H1 (cell line): ENCODE measurements at regions of chr17 and their contacts with region 1.

Region 1: GRCh38 chr17:50783193-50783660 is 15.9 kb upstream of the ANKRD40CL start:
- DNase-seq: peak; percentile 89 to 98
- H3K4me3 ChIP-seq: no peak overlapping the region
- H3K27ac ChIP-seq: no peak overlapping the region
- H3K4me1 ChIP-seq: peaks cover 0 to 3% (median 0%) of the 10 kb centered on the region in 4 experiments; a peak in 1 of 7 replicates
- H3K27me3 ChIP-seq: no peaks in the 10 kb centered on the region
- CTCF ChIP-seq: peak; percentile 99 to 100 (median 99)
- EP300 ChIP-seq: peak in 1 of 2 experiments; percentile 40; a peak in 1 of 3 replicates
- POLR2A ChIP-seq: no peak
- RAD21 ChIP-seq: peak; percentile 99 to 100

Region 2: DNA sequence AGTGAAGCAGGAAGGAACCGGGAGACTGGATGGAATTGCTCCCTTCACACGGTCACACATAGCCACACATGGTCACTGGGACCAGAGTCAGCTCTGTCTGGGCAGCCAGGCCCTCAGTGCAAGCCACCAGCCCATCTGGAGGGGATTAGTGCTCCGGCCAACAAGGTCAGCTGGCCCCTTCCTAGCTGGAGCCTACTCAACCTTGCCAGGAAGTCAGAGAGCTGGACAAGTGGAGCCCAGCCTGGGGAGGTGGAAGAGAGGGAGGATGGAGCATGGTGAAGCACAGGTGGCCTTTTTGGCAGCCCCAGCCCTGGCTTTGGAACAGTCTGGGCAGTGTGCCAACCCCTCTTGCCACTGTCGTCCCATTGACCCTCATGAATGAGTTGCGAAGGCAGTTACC is 226.4 kb before region 1 on chr17:
- CTCF ChIA-PET with region 1: no interaction called
- POLR2A ChIA-PET with region 1: no interaction called
- DNase-seq: no peak
- H3K4me3 ChIP-seq: no peak overlapping the region
- H3K27ac ChIP-seq: no peak overlapping the region
- H3K4me1 ChIP-seq: peaks cover 0 to 9% (median 3%) of the 10 kb centered on the region in 4 experiments; a peak in 4 of 7 replicates
- H3K27me3 ChIP-seq: peaks cover 4 to 37% (median 29%) of the 10 kb centered on the region in 4 experiments
- CTCF ChIP-seq: no peak
- EP300 ChIP-seq: no peak
- POLR2A ChIP-seq: no peak
- RAD21 ChIP-seq: no peak

Region 3: GRCh38 chr17:50771991-50772785 is 11.0 kb before region 1 on chr17:
- CTCF ChIA-PET with region 1: interaction called, 15 read pairs
- POLR2A ChIA-PET with region 1: interaction called, 3 read pairs
- DNase-seq: no peak
- H3K4me3 ChIP-seq: no peak overlapping the region
- H3K27ac ChIP-seq: no peak overlapping the region
- H3K4me1 ChIP-seq: no peaks in the 10 kb centered on the region
- H3K27me3 ChIP-seq: no peaks in the 10 kb centered on the region
- CTCF ChIP-seq: no peak
- EP300 ChIP-seq: no peak
- POLR2A ChIP-seq: no peak
- RAD21 ChIP-seq: no peak

Region 4: DNA sequence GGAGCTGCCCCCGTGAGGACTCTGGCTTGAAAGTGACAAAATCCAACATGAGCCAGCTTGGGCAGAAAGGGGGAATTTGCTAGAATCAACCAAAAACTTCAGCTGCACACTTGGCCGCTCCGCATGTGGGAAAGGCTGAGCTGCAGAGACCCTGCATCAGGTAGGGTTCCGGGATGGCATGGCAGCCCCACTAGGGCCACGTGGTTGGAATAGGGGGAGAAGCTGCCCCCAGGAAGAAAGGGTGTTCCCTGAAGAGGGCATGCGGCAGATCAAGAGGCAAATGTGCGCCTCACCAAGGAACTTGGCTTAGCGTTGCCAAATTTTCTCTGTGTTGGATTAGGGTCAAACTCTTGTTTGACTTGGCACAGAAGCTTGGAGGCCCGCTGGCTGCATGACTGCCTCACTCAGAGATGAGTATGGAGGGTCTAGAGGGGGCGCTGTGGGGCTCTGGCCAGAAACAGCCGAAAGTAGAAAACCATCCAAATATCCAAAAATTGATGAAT is 23.0 kb after region 1 on chr17:
- CTCF ChIA-PET with region 1: interaction called, 130 read pairs
- POLR2A ChIA-PET with region 1: no interaction called
- DNase-seq: peak in 1 of 2 experiments; percentile 68
- H3K4me3 ChIP-seq: no peak overlapping the region
- H3K27ac ChIP-seq: no peak overlapping the region
- H3K4me1 ChIP-seq: no peaks in the 10 kb centered on the region
- H3K27me3 ChIP-seq: no peaks in the 10 kb centered on the region
- CTCF ChIP-seq: peak; percentile 54 to 61 (median 58)
- EP300 ChIP-seq: no peak
- POLR2A ChIP-seq: no peak
- RAD21 ChIP-seq: peak; percentile 37 to 53; a peak in 3 of 4 replicates

Region 5: GRCh38 chr17:50828508-50829170 is 45.4 kb after region 1 on chr17:
- CTCF ChIA-PET with region 1: interaction called, 63 read pairs
- POLR2A ChIA-PET with region 1: interaction called, 3 read pairs
- DNase-seq: no peak
- H3K4me3 ChIP-seq: no peak overlapping the region
- H3K27ac ChIP-seq: no peak overlapping the region
- H3K4me1 ChIP-seq: peaks cover 7 to 17% (median 11%) of the 10 kb centered on the region in 4 experiments
- H3K27me3 ChIP-seq: no peaks in the 10 kb centered on the region
- CTCF ChIP-seq: no peak
- EP300 ChIP-seq: no peak
- POLR2A ChIP-seq: no peak
- RAD21 ChIP-seq: no peak

Region 6: DNA sequence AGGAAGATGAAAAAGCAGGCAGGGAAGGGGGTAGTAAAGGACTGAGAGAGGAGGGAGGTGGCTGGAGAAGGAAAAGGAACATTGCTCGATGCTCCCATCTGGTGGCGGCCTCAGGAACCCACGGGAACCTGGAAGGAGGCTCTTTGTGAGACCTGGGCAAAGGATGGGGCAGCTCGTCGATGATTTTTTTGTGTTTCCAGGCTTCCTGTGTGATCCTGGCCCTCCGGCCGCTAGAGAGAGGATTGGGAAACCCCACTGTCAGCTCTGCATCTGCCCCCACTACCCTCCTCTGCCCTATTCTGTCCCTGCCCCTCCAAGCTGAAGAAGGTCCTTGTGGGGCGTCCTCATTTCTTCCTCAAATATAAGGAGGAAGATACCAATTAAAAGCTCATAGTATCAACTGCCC is 58.7 kb after region 1 on chr17:
- CTCF ChIA-PET with region 1: interaction called, 223 read pairs
- POLR2A ChIA-PET with region 1: interaction called, 4 read pairs
- DNase-seq: peak; percentile 53 to 90
- H3K4me3 ChIP-seq: no peak overlapping the region
- H3K27ac ChIP-seq: no peak overlapping the region
- H3K4me1 ChIP-seq: peaks cover 0 to 10% (median 4%) of the 10 kb centered on the region in 4 experiments; a peak in 3 of 7 replicates
- H3K27me3 ChIP-seq: no peaks in the 10 kb centered on the region
- CTCF ChIP-seq: peak; percentile 89 to 91 (median 90)
- EP300 ChIP-seq: no peak
- POLR2A ChIP-seq: no peak
- RAD21 ChIP-seq: peak; percentile 86 to 91

Region 7: DNA sequence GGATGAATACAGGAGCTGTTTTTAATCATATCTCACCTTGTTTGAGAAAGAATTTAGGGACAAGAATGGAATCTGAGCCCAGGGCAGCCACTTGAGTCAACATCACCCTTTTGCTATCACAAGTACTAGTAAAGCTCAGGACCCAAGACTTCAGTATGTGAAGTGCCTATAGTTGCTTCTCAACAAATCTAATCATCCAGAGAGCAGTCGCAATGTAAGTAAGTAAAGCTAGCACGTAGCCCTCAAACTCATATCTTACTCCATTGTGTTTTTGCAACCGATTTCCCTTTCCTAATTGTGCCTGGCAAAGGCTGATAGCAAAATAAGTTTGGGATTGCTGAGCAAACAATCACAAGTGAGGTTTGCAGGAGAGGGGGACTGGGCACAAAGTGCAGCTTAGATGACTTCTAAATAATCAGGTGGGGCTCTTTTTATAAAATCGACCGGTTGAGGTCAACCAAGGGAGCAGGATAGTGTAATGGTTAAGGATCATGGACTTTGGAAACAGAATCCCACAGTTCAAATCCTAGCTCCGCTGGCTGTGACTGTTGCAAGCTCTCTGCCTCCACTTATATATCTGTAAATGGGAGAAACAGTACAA is 69.9 kb after region 1 on chr17:
- CTCF ChIA-PET with region 1: interaction called, 76 read pairs
- POLR2A ChIA-PET with region 1: interaction called, 4 read pairs
- DNase-seq: no peak
- H3K4me3 ChIP-seq: no peak overlapping the region
- H3K27ac ChIP-seq: no peak overlapping the region
- H3K4me1 ChIP-seq: peaks cover 0 to 4% (median 0%) of the 10 kb centered on the region in 4 experiments; a peak in 1 of 7 replicates
- H3K27me3 ChIP-seq: no peaks in the 10 kb centered on the region
- CTCF ChIP-seq: no peak
- EP300 ChIP-seq: no peak
- POLR2A ChIP-seq: no peak
- RAD21 ChIP-seq: no peak

Region 8: GRCh38 chr17:50877838-50878237 is 94.6 kb after region 1 on chr17:
- CTCF ChIA-PET with region 1: no interaction called
- POLR2A ChIA-PET with region 1: no interaction called
- DNase-seq: no peak
- H3K4me3 ChIP-seq: no peak overlapping the region
- H3K27ac ChIP-seq: no peak overlapping the region
- H3K4me1 ChIP-seq: no peaks in the 10 kb centered on the region
- H3K27me3 ChIP-seq: no peaks in the 10 kb centered on the region
- CTCF ChIP-seq: no peak
- EP300 ChIP-seq: no peak
- POLR2A ChIP-seq: no peak
- RAD21 ChIP-seq: no peak

Region 9: DNA sequence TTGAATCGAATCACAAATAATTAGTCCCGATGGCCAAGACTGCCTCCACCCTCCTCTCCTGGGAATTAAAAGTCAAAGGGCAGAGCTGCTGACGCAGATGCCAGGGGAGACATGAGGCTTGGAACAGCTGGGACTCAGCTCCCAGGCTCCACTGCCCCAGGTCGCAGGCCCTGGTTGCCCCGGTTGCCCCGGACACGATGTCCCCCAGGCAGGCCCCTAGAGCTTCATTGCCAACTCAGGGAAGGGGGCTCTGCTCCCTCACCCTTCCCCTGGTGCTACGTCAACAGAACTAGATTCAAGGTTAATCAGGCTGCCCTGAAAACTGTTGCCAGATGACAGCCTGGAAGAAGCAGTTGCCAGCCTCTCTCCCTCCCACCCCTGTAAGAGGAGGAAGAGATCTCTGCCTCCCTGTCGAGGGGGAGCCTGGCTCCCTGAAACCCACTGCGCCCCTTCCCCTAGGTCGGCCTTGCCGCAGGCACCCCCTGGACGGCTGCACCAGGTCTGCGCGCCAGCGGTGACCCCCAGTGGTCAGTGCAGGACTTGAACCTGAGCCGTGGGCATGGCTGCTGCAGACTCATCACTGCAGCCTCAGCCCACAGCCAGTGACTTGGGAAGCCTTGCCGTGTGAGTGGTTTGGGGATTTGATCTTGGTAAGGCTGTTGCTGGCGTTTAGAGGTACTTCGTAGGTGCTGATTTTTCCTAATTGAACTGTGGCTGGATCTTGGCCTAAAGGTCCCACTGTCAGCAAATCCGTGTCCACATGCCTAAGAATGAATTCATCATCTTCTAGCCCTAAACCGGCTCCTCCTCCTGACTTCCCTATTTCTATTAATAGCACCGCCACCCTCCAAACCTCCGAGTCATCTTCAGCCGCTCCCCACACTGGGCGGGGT is 167.0 kb after region 1 on chr17:
- CTCF ChIA-PET with region 1: interaction called, 101 read pairs
- POLR2A ChIA-PET with region 1: interaction called, 3 read pairs
- DNase-seq: peak in 1 of 2 experiments; percentile 86
- H3K4me3 ChIP-seq: no peak overlapping the region; a peak in 1 of 8 replicates
- H3K27ac ChIP-seq: no peak overlapping the region; the same call in 1 of the 2 replicates
- H3K4me1 ChIP-seq: peaks cover 3 to 32% (median 23%) of the 10 kb centered on the region in 4 experiments
- H3K27me3 ChIP-seq: no peaks in the 10 kb centered on the region
- CTCF ChIP-seq: peak; percentile 88 to 95 (median 90)
- EP300 ChIP-seq: no peak
- POLR2A ChIP-seq: no peak
- RAD21 ChIP-seq: peak; percentile 99 to 100